ENCODE measurements at regions of chr7 and their contacts with region 1.

Region 1: DNA sequence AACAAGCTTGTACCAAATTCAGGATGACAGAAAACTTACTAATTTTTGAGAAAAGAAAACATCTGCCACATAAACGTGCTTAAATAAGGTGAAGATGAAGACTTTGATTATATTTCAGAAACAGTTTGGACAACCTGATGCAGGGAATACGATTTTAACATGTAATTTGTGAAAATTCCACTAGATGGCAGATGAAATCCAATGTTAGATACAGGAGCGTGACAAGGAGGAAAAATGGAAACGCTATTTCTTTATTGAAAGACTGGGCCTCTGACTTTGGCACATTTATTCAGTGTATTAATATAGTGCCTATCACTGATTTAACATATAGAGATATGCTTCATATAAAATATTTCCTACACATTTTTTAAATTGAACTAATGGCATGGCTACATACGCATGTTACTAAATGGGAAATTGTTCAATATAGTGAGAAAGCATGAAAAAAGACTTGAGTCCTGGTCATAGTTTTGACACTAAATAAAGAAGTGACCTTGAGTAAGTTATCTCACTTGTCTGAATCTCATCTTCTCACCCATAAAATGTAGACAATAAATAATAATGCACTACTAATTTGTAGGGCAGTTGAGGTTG is 60.7 kb downstream of the CD36 start:
- DNase-seq: no peak
- ATAC-seq: peak in 3 of 4 donors; percentile 48 to 75 (median 69)
- H3K4me3 ChIP-seq: no peak overlapping the region
- H3K27ac ChIP-seq: peak overlapping the region in 1 of 12 donors; percentile 3
- H3K4me1 ChIP-seq: peaks cover 0 to 12% (median 4%) of the 10 kb centered on the region in 12 donors
- H3K27me3 ChIP-seq: no peaks in the 10 kb centered on the region
- CTCF ChIP-seq: peak; percentile 58 to 80 (median 72)
- POLR2A ChIP-seq: no peak

Region 2: GRCh38 chr7:80053124-80053523 is 646.0 kb before region 1 on chr7:
- intact Hi-C with region 1: loop called in 1 of 10 experiments (anchors 10 kb)
- DNase-seq: no peak
- ATAC-seq: no peak
- H3K4me3 ChIP-seq: no peak overlapping the region
- H3K27ac ChIP-seq: no peak overlapping the region
- H3K4me1 ChIP-seq: no peaks in the 10 kb centered on the region
- H3K27me3 ChIP-seq: no peaks in the 10 kb centered on the region
- CTCF ChIP-seq: no peak
- POLR2A ChIP-seq: no peak

Region 3: DNA sequence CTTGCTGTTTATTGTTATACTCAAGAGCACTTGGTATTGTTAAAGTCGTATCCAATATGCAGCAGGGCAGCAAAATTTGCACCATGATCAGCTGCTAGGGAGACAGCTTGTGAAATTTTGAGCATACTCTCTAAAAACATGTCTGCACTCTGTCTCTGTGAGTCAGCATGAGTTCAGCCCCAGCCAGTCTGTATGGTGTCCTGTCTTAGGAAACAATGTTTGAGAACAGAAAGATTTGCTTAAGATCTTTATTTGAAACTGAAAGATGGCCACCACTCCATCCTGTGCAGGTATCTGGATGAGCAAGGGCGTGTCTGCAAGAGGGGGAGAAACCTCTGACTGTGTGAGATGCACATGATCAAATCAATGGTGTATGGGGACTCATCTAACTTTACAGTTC is 467.4 kb before region 1 on chr7:
- intact Hi-C with region 1: no loop called
- DNase-seq: no peak
- ATAC-seq: no peak
- H3K4me3 ChIP-seq: no peak overlapping the region
- H3K27ac ChIP-seq: no peak overlapping the region
- H3K4me1 ChIP-seq: peaks cover 0 to 3% (median 0%) of the 10 kb centered on the region in 12 donors
- H3K27me3 ChIP-seq: no peaks in the 10 kb centered on the region
- CTCF ChIP-seq: no peak
- POLR2A ChIP-seq: no peak

Region 4: GRCh38 chr7:81256991-81257390 is 557.8 kb after region 1 on chr7:
- intact Hi-C with region 1: loop called (anchors 2 to 5 kb)
- DNase-seq: peak in 2 of 5 donors; percentile 32 to 38
- ATAC-seq: peak in 2 of 4 donors; percentile 56 to 61
- H3K4me3 ChIP-seq: no peak overlapping the region
- H3K27ac ChIP-seq: no peak overlapping the region
- H3K4me1 ChIP-seq: no peaks in the 10 kb centered on the region
- H3K27me3 ChIP-seq: no peaks in the 10 kb centered on the region
- CTCF ChIP-seq: peak in 11 of 12 donors; percentile 15 to 63 (median 45)
- POLR2A ChIP-seq: no peak

Region 5: GRCh38 chr7:81447351-81447952 is 748.3 kb after region 1 on chr7:
- intact Hi-C with region 1: loop called in 1 of 10 experiments (anchors 5 kb)
- DNase-seq: no peak
- ATAC-seq: peak in 1 of 4 donors; percentile 53
- H3K4me3 ChIP-seq: no peak overlapping the region
- H3K27ac ChIP-seq: no peak overlapping the region
- H3K4me1 ChIP-seq: no peaks in the 10 kb centered on the region
- H3K27me3 ChIP-seq: no peaks in the 10 kb centered on the region
- CTCF ChIP-seq: peak in 7 of 12 donors; percentile 7 to 37 (median 29)
- POLR2A ChIP-seq: no peak

Region 6: DNA sequence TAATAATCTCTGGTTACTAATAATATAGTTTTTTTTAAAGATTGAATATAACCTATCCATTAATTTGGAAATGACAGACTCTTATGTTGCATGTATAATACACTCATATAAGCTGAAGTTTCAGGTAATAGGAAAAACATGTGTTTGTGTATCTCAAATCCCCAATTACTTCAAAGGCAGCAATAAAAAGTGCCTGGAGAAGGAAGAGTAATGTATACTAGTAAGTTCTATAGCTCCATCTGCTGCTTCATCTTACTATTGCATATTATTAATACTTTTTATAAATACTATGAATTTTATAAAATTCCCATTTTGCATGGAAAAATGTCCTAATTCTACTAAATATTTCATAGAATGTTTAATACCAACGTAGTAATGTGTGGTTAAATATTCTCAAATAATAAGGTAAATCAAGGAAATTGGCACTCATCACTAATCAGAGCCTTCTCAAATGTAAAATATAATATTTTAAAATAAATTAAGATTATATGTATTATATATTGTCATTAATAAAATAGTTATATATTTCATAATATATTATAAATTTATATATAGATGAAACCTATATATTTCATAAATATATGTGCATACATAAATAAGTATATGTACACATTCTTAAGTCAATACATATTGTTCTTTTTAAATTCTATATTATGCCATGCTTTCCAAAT is 758.8 kb after region 1 on chr7:
- intact Hi-C with region 1: loop called in 6 of 10 experiments (anchors 5 kb)
- DNase-seq: no peak
- ATAC-seq: no peak
- H3K4me3 ChIP-seq: no peak overlapping the region
- H3K27ac ChIP-seq: no peak overlapping the region
- H3K4me1 ChIP-seq: no peaks in the 10 kb centered on the region
- H3K27me3 ChIP-seq: no peaks in the 10 kb centered on the region
- CTCF ChIP-seq: peak in 5 of 12 donors; percentile 34 to 48 (median 46)
- POLR2A ChIP-seq: no peak

Region 7: GRCh38 chr7:81469869-81470723 is 771.0 kb after region 1 on chr7:
- intact Hi-C with region 1: loop called (anchors 2 to 5 kb)
- DNase-seq: peak; percentile 63 to 76 (median 68)
- ATAC-seq: peak; percentile 75 to 92 (median 86)
- H3K4me3 ChIP-seq: peak overlapping the region in 3 of 12 donors; percentile 9 to 29 (median 9)
- H3K27ac ChIP-seq: peak overlapping the region in 2 of 12 donors; percentile 5 to 18
- H3K4me1 ChIP-seq: peaks cover 0 to 14% (median 0%) of the 10 kb centered on the region in 12 donors
- H3K27me3 ChIP-seq: no peaks in the 10 kb centered on the region
- CTCF ChIP-seq: peak; percentile 40 to 76 (median 64)
- POLR2A ChIP-seq: no peak